Sciatic nerve (tissue), 2 donors: ENCODE measurements at regions of chr5 and their contacts with region 1.

Region 1: GRCh38 chr5:6478793-6479192 is 30.1 kb downstream of the UBE2QL1 start:
- DNase-seq: no peak
- ATAC-seq: no peak

Region 2: DNA sequence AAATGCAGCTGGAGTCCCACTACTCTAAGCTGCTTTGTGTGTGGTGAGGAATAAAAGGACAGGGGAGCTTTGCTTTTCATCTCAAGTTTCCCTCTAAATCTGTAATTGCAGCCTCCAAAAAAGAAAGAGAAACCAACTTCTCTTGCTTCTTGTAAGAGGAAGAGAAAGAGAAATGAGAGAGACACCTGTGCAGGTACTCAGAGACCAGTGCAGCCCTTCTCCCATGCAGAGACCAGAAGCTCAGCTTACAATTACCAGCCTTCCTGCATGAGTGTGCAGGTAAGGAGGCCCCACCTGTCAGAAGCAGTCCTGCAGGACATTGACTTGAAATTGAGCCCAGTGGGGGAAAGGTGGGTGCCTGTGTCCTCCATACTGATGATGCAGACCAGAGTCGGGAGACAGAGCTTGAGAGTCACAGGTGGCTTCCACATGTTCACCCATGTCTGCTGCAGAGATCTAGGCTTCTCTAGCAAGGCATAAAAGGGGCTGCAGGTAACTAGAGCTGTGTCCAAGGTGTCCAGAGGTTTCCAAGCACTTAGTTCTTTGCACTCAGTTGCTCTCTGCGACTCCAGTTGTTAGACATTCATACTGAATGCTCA is 85.1 kb before region 1 on chr5:
- intact Hi-C with region 1: loop called (anchors 2 kb)
- DNase-seq: no peak
- ATAC-seq: no peak